AG04449 (cell line): ENCODE measurements at regions of chr1 and their contacts with region 1.

Region 1: DNA sequence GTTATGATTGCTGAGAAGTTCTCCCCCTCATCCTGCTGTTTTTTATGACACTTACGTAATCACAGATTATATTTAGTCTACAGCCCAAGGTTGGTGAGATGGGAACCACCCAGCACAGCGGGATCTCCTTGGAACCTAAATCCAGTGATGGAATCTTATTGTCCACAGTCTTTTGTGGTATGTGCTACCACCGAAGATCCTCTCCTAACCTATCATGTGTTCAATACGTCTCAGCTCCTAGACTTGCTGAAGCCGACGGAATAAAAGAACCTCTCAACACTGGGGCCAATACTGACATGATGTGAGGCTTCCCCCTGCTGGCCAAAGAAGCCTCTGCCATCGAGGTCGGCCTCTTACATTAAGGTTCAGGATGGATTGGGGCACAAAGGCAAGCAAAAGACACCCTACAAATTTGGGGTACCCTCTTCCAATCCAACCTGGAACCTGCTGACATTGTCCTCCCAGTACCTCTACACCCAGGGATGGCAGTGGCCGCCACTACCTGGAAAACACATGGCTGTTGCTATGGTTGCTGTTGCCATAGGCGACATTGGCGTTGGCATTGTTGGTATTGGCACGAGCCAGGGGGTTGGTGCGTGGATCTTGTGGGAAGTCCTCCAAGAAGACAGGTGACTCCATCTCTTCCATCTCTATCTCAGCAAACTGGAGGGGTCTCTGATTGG is 19.4 kb upstream of the KIF21B start:
- DNase-seq: peak; percentile 23
- H3K4me3 ChIP-seq: no peak overlapping the region
- CTCF ChIP-seq: peak; percentile 84

Region 2: DNA sequence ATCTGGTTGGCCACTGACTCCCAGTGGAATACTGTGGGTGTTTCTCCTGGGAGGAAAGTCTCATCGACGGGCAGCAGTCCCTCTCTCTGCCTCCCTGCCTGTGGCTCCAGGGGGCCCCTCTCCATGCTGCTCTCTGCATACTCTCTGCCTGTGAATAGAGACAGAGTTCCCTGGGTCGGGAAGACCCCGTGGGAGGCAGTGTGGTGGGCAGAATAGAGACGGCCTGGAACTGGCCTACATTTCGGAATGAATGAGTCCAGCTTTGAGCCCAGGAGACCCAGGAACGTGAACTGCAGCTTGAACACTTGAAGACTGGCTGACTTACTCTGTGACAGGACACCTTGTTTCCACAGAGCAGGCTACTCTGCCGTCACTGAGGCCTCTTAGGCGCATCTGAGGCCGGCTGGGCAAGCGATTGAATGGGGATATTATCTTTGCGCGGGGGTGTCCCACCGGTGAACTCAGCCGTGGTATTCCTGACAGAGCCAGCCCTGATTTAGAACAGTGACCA is 83.5 kb before region 1 on chr1:
- CTCF ChIA-PET with region 1: no interaction called
- POLR2A ChIA-PET with region 1: no interaction called
- DNase-seq: no peak
- H3K4me3 ChIP-seq: no peak overlapping the region
- CTCF ChIP-seq: no peak

Region 3: DNA sequence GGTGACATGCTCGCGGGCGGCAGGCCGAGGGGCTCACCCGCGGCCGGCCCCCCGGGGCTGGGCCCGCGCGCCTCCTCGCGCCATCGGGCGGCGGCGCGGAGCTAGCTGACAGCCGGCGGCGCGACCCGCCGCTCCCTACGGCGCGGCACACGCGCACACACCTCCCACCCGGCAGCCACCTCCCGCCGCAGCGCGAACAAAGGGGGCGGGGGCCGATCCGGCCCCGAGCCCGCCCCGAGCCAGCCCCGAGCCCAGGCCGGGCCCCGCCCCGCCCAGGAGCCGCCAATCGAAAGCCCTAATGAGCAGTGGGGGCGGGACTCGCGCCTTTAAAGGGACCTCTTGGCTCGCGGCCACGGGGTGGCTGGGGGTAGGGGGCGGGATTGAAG is 19.4 kb before region 1 on chr1 and contains the start of gene KIF21B:
- CTCF ChIA-PET with region 1: interaction called, 125 read pairs
- POLR2A ChIA-PET with region 1: no interaction called
- DNase-seq: no peak
- H3K4me3 ChIP-seq: peak within 1 kb of the TSS; percentile 64
- CTCF ChIP-seq: no peak

Region 4: GRCh38 chr1:201032408-201032807 is 10.5 kb before region 1 on chr1:
- CTCF ChIA-PET with region 1: interaction called, 125 read pairs
- POLR2A ChIA-PET with region 1: no interaction called
- DNase-seq: no peak
- H3K4me3 ChIP-seq: no peak overlapping the region
- CTCF ChIP-seq: no peak

Region 5: DNA sequence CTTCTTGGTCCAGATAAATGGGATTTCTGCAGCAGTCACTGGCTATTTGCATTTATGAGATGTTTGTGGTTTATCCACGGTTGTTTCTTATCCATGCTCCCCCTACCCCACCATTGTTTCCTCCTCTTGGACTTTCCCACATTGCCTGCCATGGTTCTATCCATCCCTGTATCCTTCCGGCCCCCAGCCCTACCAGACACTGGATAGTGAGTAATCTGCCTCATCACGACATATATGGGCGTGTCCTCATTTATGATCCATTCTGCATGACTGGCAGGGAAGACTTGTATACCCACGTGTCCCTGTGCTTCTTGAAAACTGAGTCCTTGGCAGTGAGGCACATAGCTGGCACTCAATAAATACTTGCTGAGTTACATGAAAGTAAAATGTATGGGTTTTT is 29.2 kb after region 1 on chr1:
- CTCF ChIA-PET with region 1: interaction called, 11 read pairs
- POLR2A ChIA-PET with region 1: no interaction called
- DNase-seq: no peak
- H3K4me3 ChIP-seq: no peak overlapping the region
- CTCF ChIP-seq: no peak